Caco-2 (cell line): ENCODE measurements at regions of chr2 and their contacts with region 1.

Region 1: DNA sequence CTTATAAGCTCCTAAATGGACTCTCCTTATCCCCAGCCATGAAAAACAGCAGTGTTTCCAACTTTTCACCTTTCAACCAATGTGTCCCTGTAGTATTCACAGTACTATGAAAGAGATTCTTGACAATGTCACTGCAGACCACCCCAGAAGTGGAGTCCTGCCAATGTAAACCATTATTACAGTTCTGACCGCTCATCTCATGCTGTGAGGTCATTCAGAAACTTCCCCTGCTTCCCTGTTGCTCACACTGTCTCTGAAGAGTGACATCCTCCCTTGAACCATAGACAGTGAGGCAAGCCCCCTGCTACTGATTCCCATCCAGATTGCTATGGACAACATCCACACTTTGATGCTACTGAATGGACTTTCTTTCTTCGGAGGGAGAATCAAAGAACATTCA is 1523.7 kb upstream of the ACVR2A start:
- DNase-seq: no peak
- H3K4me3 ChIP-seq: no peak overlapping the region
- H3K4me3 Mint-ChIP-seq: no peak overlapping the region
- H3K27ac Mint-ChIP-seq: no peak overlapping the region
- H3K4me1 ChIP-seq: no peaks in the 10 kb centered on the region
- H3K4me1 Mint-ChIP-seq: no peaks in the 10 kb centered on the region
- H3K27me3 ChIP-seq: no peaks in the 10 kb centered on the region
- H3K27me3 Mint-ChIP-seq: peaks cover 5% of the 10 kb centered on the region
- CTCF ChIP-seq: no peak

Region 2: DNA sequence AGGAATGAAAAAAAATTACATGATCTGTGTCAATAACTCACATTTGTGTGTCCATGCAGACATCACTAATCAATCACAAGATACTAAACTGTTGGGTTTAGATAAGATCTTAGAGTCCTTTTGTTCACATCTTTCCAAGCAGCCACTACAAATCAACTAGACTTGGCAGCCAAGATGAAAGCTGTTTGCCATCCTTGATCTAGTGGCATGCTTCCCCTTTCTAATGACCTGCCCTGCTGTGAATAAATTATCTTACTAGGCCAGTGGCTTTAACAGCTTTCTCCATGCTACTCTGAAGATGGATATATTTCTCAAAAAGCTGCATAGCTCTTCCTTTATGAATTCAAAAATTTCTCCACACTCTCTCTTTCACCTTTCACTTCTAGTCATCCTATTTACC is 185.7 kb after region 1 on chr2:
- CTCF ChIA-PET with region 1: no interaction called
- POLR2A ChIA-PET with region 1: no interaction called
- intact Hi-C with region 1: loop called (anchors 10 kb)
- DNase-seq: no peak
- H3K4me3 ChIP-seq: no peak overlapping the region
- H3K4me3 Mint-ChIP-seq: no peak overlapping the region
- H3K27ac Mint-ChIP-seq: no peak overlapping the region
- H3K4me1 ChIP-seq: no peaks in the 10 kb centered on the region
- H3K4me1 Mint-ChIP-seq: peaks cover 6% of the 10 kb centered on the region
- H3K27me3 ChIP-seq: no peaks in the 10 kb centered on the region
- H3K27me3 Mint-ChIP-seq: no peaks in the 10 kb centered on the region
- CTCF ChIP-seq: no peak